Mammary epithelial cell (primary cell): ENCODE measurements at regions of chr1 and their contacts with region 1.

Region 1: GRCh38 chr1:204213668-204214662 is at the start of gene GOLT1A:
- DNase-seq: peak; percentile 73
- H3K4me3 ChIP-seq: peak within 1 kb of the TSS; percentile 1 to 38 (median 34)
- H3K27ac ChIP-seq: no peak within 1 kb of the TSS
- H3K4me1 ChIP-seq: peaks cover 11% of the 10 kb centered on the region
- H3K27me3 ChIP-seq: no peaks in the 10 kb centered on the region
- CTCF ChIP-seq: peak; percentile 76 to 77
- total RNA-seq, gene GOLT1A: 0.59 TPM in 1 of 2 donors, not detected in the other

Region 2: GRCh38 chr1:204151552-204152309 is 62.2 kb before region 1 on chr1 and contains the start of gene ETNK2:
- CTCF ChIA-PET with region 1: no interaction called
- dilution Hi-C with region 1: no loop called
- in situ Hi-C with region 1: no loop called
- intact Hi-C with region 1: no loop called
- DNase-seq: no peak
- H3K4me3 ChIP-seq: peak within 1 kb of the TSS; percentile 50 to 68 (median 57)
- H3K27ac ChIP-seq: no peak within 1 kb of the TSS
- H3K4me1 ChIP-seq: peaks cover 18% of the 10 kb centered on the region
- H3K27me3 ChIP-seq: no peaks in the 10 kb centered on the region
- CTCF ChIP-seq: no peak
- total RNA-seq, gene ETNK2: 6.2 to 17.2 TPM

Region 3: DNA sequence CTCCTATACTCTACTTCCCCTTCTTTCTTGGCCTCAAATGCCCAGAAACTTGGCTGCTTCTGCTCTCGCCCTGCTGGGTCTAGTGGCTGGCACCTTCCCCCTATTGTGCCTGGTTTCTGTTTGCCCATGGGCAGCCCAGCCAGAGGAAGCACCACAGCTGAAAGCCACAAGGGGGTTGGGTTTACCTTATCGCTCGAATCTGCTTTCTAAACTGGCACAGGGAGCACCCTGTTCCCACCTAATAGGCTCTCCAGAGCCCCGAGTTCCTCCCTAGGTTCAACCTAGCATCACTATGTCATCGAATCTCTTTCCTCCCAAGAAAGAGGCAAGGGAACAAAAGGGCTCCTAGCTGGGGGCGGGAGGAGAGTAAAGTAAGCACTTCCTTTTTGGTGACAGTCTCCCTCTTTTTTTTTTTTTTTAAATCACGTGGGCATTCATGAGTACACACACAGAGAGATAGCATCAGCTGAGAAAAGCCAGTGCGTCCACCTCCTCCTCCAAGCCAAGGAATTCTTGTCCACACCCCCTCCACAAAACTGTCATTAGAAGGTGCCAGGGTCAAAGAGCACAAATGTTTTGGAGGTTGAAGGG is 73.0 kb after region 1 on chr1:
- CTCF ChIA-PET with region 1: no interaction called
- dilution Hi-C with region 1: no loop called
- in situ Hi-C with region 1: no loop called
- intact Hi-C with region 1: loop called (anchors 5 kb)
- DNase-seq: peak; percentile 33
- H3K4me3 ChIP-seq: peak overlapping the region; percentile 41 to 55 (median 44)
- H3K27ac ChIP-seq: peak overlapping the region; percentile 62
- H3K4me1 ChIP-seq: peaks cover 29% of the 10 kb centered on the region
- H3K27me3 ChIP-seq: no peaks in the 10 kb centered on the region
- CTCF ChIP-seq: peak in 1 of 2 donors; percentile 11

Region 4: DNA sequence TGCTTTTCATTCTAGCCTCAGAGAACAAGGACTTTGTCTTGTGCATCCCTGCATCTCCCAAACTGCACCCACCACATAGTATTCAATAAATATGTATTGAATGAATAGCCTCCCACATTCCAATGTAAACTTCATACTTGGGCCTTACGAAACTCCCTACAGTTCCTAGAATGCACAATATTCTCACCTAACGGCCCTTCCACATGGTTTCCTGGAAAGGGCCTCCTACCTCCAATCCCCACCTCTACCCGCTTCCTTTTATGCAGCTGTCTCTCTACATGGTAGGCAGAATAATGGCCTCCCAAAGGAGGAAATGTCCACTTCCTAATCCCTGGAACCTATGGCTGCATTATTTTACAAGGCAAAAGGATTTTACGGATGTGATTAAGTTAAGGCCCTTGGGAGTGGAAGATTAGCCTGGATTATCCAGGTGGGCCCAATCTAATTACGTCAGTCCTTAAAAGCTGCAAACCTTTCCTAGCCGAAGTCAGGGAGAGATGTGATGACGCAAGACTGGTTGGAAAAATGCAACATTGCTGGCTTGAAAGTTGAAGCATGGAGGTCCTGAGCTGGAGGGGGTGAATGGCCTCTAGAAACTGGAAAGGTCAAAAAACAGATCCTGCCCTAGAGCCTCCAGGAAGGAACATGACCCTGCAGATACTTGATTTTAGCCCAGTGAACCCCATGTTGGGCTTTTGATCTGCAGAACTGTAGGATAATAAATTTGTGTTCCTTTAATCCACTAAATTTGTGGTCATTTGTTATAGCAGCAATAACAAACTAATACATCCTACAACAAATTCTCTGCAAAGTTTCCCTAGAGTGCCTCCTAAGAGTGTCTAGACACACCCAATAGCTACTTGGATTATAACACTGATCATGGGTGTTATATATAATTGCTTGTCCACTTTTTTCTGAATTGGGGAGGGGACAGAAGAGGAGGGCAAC is 285.8 kb after region 1 on chr1:
- CTCF ChIA-PET with region 1: no interaction called
- dilution Hi-C with region 1: no loop called
- in situ Hi-C with region 1: no loop called
- intact Hi-C with region 1: loop called (anchors 2 kb)
- DNase-seq: no peak
- H3K4me3 ChIP-seq: no peak overlapping the region
- H3K27ac ChIP-seq: no peak overlapping the region
- H3K4me1 ChIP-seq: peaks cover 3% of the 10 kb centered on the region
- H3K27me3 ChIP-seq: no peaks in the 10 kb centered on the region
- CTCF ChIP-seq: no peak